ENCODE measurements at regions of chr21 and their contacts with region 1.

Region 1: GRCh38 chr21:36060159-36060921 is at the start of gene SETD4:
- DNase-seq: peak; percentile 91 to 97 (median 94)
- ATAC-seq: peak; percentile 93
- H3K4me3 ChIP-seq: peak within 1 kb of the TSS; percentile 80
- H3K4me3 Mint-ChIP-seq: peak within 1 kb of the TSS; percentile 88 to 98 (median 96)
- H3K27ac ChIP-seq: peak within 1 kb of the TSS; percentile 89
- H3K27ac Mint-ChIP-seq: peak within 1 kb of the TSS; percentile 96 to 98 (median 97)
- H3K4me1 ChIP-seq: no peaks in the 10 kb centered on the region
- H3K4me1 Mint-ChIP-seq: peaks cover 2 to 38% (median 24%) of the 10 kb centered on the region in 7 donors
- H3K27me3 ChIP-seq: no peaks in the 10 kb centered on the region
- H3K27me3 Mint-ChIP-seq: peaks cover 0 to 4% (median 0%) of the 10 kb centered on the region in 5 donors
- total RNA-seq, gene SETD4: 17.1 to 31.5 (median 20.9) TPM

Region 2: DNA sequence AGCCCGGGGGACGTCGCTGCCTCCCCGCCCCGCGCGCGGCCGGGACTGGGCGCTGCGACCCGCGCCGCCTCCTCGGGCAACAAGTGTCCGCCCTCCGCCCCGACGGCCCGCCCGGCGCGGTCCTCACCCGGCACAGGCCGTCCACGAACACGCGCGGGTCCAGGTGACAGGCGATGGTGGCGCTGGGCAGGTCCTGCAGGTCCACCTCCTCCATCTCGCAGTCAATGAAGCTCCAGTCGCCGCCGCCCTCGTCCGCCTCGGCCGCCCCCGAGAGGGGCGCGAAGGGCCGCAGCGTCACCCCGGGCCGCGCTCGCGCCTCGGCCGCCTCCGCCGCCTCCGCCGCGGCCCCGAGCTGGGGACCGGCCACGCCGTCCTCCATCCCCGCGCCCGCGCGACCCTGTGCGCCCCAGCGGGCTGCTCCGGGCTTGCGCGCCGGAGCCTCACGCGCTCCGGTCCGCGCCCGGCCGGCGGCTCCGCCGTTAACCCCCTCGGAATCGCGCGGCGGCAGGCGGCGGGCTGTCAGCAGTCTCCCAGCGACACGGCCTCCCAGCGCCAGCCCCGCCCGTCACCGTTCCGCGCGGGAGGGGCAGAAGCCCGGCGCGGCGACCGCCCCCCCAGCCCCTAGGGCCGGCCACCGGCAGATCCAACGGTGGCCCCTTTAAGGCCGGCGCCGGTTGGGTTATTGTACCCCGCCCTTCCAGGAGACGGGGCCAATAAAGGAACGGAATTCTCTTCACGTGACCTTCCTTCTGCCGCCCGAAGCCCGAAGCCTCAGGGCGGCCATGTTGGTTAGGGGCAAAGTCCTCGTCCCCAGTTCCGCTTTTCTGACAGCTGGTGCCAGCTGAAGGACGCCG is 1445.5 kb before region 1 on chr21 and contains the start of gene RCAN1:
- CTCF ChIA-PET with region 1: no interaction called
- POLR2A ChIA-PET with region 1: no interaction called
- intact Hi-C with region 1: loop called in 1 of 2 experiments (anchors 1 kb)
- DNase-seq: peak; percentile 70 to 87 (median 85)
- ATAC-seq: peak; percentile 99
- H3K4me3 ChIP-seq: peak within 1 kb of the TSS; percentile 67
- H3K4me3 Mint-ChIP-seq: peak within 1 kb of the TSS; percentile 83 to 96 (median 93)
- H3K27ac ChIP-seq: peak within 1 kb of the TSS; percentile 57
- H3K27ac Mint-ChIP-seq: peak within 1 kb of the TSS; percentile 82 to 95 (median 83)
- H3K4me1 ChIP-seq: peaks cover 4 to 12% of the 10 kb centered on the region in 2 donors
- H3K4me1 Mint-ChIP-seq: peaks cover 15 to 25% (median 20%) of the 10 kb centered on the region in 7 donors
- H3K27me3 ChIP-seq: no peaks in the 10 kb centered on the region
- H3K27me3 Mint-ChIP-seq: peaks cover 0 to 32% (median 0%) of the 10 kb centered on the region in 5 donors
- total RNA-seq, gene RCAN1: 3.0 to 8.1 (median 4.9) TPM

Region 3: DNA sequence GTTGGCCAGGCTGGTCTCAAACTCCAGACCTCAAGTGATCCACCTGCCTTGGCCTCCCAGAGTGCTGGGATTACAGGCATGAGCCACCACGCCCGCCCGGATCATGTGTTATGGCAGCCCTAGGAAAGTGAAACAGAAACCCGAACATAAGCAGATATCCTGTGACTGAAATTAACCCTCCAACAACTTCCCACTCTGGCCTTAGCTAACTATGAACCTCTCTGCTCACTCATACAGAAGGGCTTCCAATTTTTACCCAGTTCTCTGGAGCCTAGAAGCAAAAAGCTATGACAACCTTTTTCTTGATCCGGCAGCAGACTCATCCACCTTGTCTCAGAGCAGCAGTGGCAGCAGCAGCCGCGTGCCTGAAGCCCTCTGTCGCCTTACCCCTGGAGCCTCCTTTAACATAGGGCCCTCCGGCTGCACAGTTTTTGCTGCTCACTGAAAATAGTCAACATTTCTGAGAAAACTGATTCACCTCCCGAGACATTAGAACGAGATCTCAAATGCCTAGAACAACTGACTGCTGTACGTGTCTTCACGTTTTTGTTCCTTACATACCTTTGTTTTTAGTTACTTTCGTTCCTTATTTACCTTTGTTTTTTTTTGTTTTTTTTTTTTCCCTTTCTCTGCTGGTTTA is 18.8 kb after region 1 on chr21:
- CTCF ChIA-PET with region 1: no interaction called
- POLR2A ChIA-PET with region 1: interaction called, 17 read pairs
- intact Hi-C with region 1: loop called (anchors 1 kb)
- DNase-seq: peak in 7 of 9 donors; percentile 37 to 66 (median 51)
- ATAC-seq: peak; percentile 74
- H3K4me3 ChIP-seq: peak overlapping the region; percentile 44
- H3K4me3 Mint-ChIP-seq: peak overlapping the region; percentile 46 to 93 (median 81)
- H3K27ac ChIP-seq: peak overlapping the region; percentile 66
- H3K27ac Mint-ChIP-seq: peak overlapping the region; percentile 71 to 99 (median 97)
- H3K4me1 ChIP-seq: peaks cover 0 to 10% of the 10 kb centered on the region in 2 donors
- H3K4me1 Mint-ChIP-seq: peaks cover 8 to 42% (median 34%) of the 10 kb centered on the region in 7 donors
- H3K27me3 ChIP-seq: no peaks in the 10 kb centered on the region
- H3K27me3 Mint-ChIP-seq: no peaks in the 10 kb centered on the region

Region 4: DNA sequence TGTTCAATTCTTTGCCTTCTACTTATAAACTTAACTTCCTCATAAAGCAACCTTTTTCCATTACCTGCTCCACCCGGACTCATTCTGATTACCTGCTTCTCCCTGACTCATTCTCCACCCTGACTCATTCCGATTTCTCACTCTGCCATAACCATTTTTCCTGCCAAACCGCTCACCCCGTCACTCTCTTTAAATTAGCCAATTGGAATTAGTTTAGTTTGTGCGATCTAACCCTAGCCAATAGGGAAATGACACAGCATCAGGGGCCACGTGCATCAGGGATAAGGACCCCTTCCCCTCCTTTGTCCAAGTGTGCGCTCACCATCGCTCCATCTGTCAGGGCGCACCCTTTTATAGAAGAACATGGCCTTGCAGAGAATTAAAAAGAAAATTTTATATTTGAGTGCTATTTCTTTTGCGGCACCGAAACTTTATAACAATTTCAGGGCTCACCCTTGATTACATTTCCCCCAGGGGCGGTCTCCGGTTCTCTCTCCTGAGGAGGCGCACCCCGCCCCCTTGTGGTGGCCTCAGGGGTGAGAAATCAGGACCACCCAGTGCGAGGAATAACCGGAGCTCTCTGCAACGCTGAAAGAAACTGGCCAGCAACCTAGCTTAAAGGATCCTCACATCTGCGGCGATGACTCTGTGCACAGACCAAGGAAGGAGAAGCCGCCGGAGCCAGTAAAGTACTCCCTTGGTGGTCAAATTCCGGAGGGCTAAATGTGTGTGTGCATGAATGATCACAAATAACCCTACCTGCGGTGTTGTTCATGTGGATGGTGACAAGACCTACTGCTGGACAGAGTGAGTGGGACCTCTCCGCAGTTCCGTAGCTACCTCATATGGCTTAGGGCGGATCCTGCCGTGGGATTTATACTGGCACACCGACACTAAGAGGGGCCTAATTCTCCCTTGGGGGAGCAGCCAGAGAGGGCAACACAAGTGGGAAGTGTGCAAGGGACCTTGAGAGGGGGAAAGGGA is 44.3 kb after region 1 on chr21:
- CTCF ChIA-PET with region 1: interaction called, 3 read pairs
- POLR2A ChIA-PET with region 1: interaction called, 3 read pairs
- intact Hi-C with region 1: loop called (anchors 1 kb)
- DNase-seq: peak; percentile 31 to 64 (median 44)
- ATAC-seq: peak; percentile 73
- H3K4me3 ChIP-seq: no peak overlapping the region
- H3K4me3 Mint-ChIP-seq: peak overlapping the region in 9 of 10 donors; percentile 0 to 72 (median 45)
- H3K27ac ChIP-seq: no peak overlapping the region
- H3K27ac Mint-ChIP-seq: peak overlapping the region in 3 of 9 donors; percentile 21 to 38 (median 36)
- H3K4me1 ChIP-seq: no peaks in the 10 kb centered on the region
- H3K4me1 Mint-ChIP-seq: peaks cover 3 to 12% (median 9%) of the 10 kb centered on the region in 7 donors
- H3K27me3 ChIP-seq: peaks cover 0 to 3% of the 10 kb centered on the region in 2 donors
- H3K27me3 Mint-ChIP-seq: peaks cover 28 to 58% (median 33%) of the 10 kb centered on the region in 5 donors

Region 5: DNA sequence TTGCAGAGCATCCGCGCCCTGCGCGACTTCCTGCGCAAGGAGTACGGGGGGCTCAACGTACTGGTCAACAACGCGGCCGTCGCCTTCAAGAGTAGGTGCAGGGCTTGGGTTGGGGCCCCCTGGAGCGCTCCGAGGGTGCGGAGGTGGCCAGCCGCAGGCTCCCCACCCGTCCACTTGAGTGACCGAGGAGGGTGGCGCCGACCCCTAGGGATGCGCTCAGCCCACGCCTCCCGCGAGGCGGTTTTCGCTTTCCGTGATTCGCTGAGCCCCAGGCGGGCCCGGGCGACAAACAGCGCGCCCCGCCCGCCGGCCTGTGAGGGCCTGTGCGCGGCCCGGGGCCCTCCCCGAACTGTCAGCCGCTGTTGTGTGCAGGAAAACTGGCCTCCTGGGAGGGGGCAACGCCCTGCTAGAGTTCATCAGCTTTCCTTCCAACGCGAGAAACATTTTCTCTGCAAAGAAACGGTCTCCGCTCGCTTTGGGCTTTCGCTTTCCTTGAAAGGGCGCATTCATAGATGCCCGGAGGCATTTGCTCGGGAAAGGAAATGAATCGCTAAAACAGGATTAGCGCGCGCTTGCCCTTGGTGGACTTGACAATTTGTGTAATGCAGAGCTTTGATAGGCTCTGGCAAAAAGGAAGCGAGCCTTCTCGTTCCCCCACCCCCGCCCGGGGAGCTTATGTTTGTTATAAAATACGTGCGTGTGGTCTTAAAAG is 75.2 kb after region 1 on chr21:
- CTCF ChIA-PET with region 1: no interaction called
- POLR2A ChIA-PET with region 1: interaction called, 3 read pairs
- intact Hi-C with region 1: loop called in 1 of 2 experiments (anchors 2 kb)
- DNase-seq: peak; percentile 25 to 76 (median 41)
- ATAC-seq: peak; percentile 84
- H3K4me3 ChIP-seq: peak overlapping the region; percentile 81
- H3K4me3 Mint-ChIP-seq: peak overlapping the region; percentile 83 to 98 (median 92)
- H3K27ac ChIP-seq: peak overlapping the region; percentile 58
- H3K27ac Mint-ChIP-seq: peak overlapping the region; percentile 79 to 94 (median 88)
- H3K4me1 ChIP-seq: peaks cover 4 to 13% of the 10 kb centered on the region in 2 donors
- H3K4me1 Mint-ChIP-seq: peaks cover 11 to 33% (median 26%) of the 10 kb centered on the region in 7 donors
- H3K27me3 ChIP-seq: no peaks in the 10 kb centered on the region
- H3K27me3 Mint-ChIP-seq: no peaks in the 10 kb centered on the region

Region 6: GRCh38 chr21:36385233-36386030 is 325.1 kb after region 1 on chr21 and contains the start of gene CHAF1B:
- CTCF ChIA-PET with region 1: no interaction called
- POLR2A ChIA-PET with region 1: no interaction called
- intact Hi-C with region 1: loop called (anchors 2 kb)
- DNase-seq: peak; percentile 63 to 94 (median 82)
- ATAC-seq: peak; percentile 99
- H3K4me3 ChIP-seq: peak within 1 kb of the TSS; percentile 77
- H3K4me3 Mint-ChIP-seq: peak within 1 kb of the TSS; percentile 70 to 89 (median 85)
- H3K27ac ChIP-seq: peak within 1 kb of the TSS; percentile 68
- H3K27ac Mint-ChIP-seq: peak within 1 kb of the TSS in 8 of 9 donors; percentile 7 to 83 (median 56)
- H3K4me1 ChIP-seq: peaks cover 0 to 4% of the 10 kb centered on the region in 2 donors
- H3K4me1 Mint-ChIP-seq: peaks cover 4 to 30% (median 6%) of the 10 kb centered on the region in 7 donors
- H3K27me3 ChIP-seq: no peaks in the 10 kb centered on the region
- H3K27me3 Mint-ChIP-seq: no peaks in the 10 kb centered on the region
- total RNA-seq, gene CHAF1B: 1.5 to 21.4 (median 4.0) TPM

Region 7: GRCh38 chr21:36603221-36603620 is 542.9 kb after region 1 on chr21:
- CTCF ChIA-PET with region 1: no interaction called
- POLR2A ChIA-PET with region 1: no interaction called
- intact Hi-C with region 1: no loop called
- DNase-seq: peak in 7 of 9 donors; percentile 46 to 85 (median 76)
- ATAC-seq: peak; percentile 91
- H3K4me3 ChIP-seq: no peak overlapping the region
- H3K4me3 Mint-ChIP-seq: peak overlapping the region; percentile 25 to 90 (median 74)
- H3K27ac ChIP-seq: peak overlapping the region; percentile 57
- H3K27ac Mint-ChIP-seq: peak overlapping the region; percentile 34 to 99 (median 95)
- H3K4me1 ChIP-seq: peaks cover 0 to 20% of the 10 kb centered on the region in 2 donors
- H3K4me1 Mint-ChIP-seq: peaks cover 10 to 64% (median 50%) of the 10 kb centered on the region in 7 donors
- H3K27me3 ChIP-seq: no peaks in the 10 kb centered on the region
- H3K27me3 Mint-ChIP-seq: peaks cover 0 to 11% (median 0%) of the 10 kb centered on the region in 5 donors